GM10248 (cell line): ENCODE measurements at regions of chr17 and their contacts with region 1.

Region 1: GRCh38 chr17:76121932-76122430 is 18.4 kb upstream of the EXOC7 start:
- DNase-seq: no peak
- CTCF ChIP-seq: no peak

Region 2: GRCh38 chr17:76103274-76104139 is 18.5 kb before region 1 on chr17 and contains the start of gene EXOC7:
- CTCF ChIA-PET with region 1: interaction called, 12 read pairs
- POLR2A ChIA-PET with region 1: no interaction called
- DNase-seq: peak; percentile 99
- CTCF ChIP-seq: no peak

Region 3: GRCh38 chr17:76111956-76112355 is 10.0 kb before region 1 on chr17:
- CTCF ChIA-PET with region 1: interaction called, 14 read pairs
- POLR2A ChIA-PET with region 1: interaction called, 3 read pairs
- DNase-seq: no peak
- CTCF ChIP-seq: no peak

Region 4: DNA sequence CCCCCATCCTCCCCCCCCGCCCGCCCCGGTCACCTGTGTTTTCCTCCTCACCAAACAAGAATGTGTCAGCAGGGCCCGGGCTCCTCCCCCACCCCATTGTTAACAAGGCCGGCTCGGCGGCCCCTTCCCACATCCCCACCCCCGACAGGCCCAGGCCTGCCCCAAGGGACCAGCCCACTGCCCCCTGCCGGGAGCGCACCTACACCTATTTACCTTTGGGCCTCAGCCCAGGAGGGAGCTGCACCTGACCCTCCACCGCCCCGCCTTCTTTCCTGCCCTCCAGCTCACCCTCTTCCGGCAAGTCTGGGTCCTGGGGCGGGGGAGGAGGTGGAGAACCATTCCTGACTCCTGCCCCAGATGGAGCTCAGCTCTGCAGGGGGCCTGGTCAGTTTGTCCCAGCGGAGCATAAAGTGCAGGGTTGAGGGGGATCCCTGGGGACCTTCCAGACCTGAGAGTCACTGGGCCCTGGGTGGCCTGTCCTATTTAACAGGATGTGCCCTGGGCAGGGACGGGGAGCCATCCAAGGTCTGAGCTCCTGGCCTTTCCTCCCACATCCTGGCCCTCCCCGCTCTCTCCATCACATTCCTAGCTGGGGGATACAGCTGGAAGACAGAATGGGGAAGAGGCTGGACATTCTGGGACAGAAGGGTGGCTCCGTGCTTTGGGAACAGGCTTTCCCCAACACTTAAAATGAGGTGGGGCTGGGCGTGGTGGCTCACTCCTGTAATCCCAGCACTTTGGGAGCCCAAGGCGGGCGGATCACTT is 10.8 kb after region 1 on chr17:
- CTCF ChIA-PET with region 1: interaction called, 20 read pairs
- POLR2A ChIA-PET with region 1: no interaction called
- DNase-seq: no peak
- CTCF ChIP-seq: no peak

Region 5: DNA sequence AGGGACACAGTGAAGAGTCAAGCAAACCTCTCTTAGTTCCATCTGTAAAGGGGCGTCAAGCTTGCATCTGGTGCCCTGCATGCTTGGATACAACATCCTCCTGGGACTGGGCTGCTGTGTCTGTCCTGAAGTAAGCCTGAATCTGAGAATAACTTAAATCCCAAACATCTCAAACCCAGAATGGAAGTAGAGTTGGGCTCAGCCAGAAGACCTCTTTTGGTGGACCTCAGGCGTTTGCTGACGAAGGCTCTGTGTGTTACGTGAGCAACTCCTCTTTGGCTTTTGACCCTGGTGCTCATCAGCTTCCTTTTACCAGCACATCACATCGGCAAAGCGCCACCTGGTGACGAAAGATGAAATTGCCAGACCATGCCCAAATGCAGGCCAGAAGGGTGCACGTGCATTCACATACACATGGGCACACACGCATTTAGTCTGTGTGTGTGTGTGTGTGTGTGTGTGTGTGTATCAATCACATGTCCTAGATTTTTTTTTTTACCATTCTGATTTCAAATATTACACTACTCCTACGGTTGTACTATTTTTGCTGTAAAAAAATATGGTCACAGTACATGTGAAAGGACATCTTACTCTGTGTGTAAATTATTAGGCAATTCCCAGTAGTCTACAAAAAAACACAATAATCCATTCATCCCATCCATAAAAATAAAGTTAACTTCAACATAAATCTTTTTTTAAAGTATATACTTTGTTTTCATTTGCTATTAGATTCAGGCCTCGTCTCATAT is 60.2 kb after region 1 on chr17:
- CTCF ChIA-PET with region 1: interaction called, 51 read pairs
- POLR2A ChIA-PET with region 1: no interaction called
- DNase-seq: peak; percentile 83
- CTCF ChIP-seq: peak; percentile 91

Region 6: GRCh38 chr17:76264755-76265596 is 143.0 kb after region 1 on chr17 and contains the start of gene UBALD2:
- CTCF ChIA-PET with region 1: interaction called, 86 read pairs
- POLR2A ChIA-PET with region 1: no interaction called
- DNase-seq: peak; percentile 93
- CTCF ChIP-seq: no peak

Region 7: GRCh38 chr17:76296186-76296585 is 174.2 kb after region 1 on chr17:
- CTCF ChIA-PET with region 1: interaction called, 24 read pairs
- POLR2A ChIA-PET with region 1: no interaction called
- DNase-seq: no peak
- CTCF ChIP-seq: no peak